PC-9 (cell line): ENCODE measurements at regions of chr3 and their contacts with region 1.

Region 1: DNA sequence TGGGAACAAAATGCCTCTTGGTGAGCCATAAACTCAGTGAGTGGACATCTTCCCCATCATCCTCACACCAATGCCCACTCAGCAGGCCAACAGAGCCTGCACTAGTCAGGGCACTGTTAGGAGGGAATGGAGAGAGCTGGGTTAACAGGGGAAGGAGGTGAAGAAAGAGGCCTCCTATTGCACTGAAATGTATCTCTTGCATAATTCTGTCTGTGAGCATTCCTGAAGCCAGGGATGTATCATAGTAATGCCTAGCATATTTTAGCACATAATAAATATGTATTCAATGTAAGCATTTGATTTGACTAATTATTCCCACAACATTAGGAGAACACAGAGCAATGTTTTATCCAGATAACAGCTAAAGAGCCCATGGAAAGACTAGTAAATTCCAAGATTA is 81.2 kb downstream of the ANO10 start:
- DNase-seq: no peak
- H3K4me3 ChIP-seq: no peak overlapping the region
- H3K27ac ChIP-seq: no peak overlapping the region
- H3K4me1 ChIP-seq: no peaks in the 10 kb centered on the region
- H3K27me3 ChIP-seq: no peaks in the 10 kb centered on the region
- CTCF ChIP-seq: no peak

Region 2: GRCh38 chr3:43231276-43232000 is 309.2 kb before region 1 on chr3:
- CTCF ChIA-PET with region 1: no interaction called
- POLR2A ChIA-PET with region 1: no interaction called
- intact Hi-C with region 1: no loop called
- DNase-seq: no peak
- H3K4me3 ChIP-seq: no peak overlapping the region
- H3K27ac ChIP-seq: no peak overlapping the region
- H3K4me1 ChIP-seq: peaks cover 7% of the 10 kb centered on the region; the same call in 1 of the 2 replicates
- H3K27me3 ChIP-seq: no peaks in the 10 kb centered on the region
- CTCF ChIP-seq: no peak

Region 3: DNA sequence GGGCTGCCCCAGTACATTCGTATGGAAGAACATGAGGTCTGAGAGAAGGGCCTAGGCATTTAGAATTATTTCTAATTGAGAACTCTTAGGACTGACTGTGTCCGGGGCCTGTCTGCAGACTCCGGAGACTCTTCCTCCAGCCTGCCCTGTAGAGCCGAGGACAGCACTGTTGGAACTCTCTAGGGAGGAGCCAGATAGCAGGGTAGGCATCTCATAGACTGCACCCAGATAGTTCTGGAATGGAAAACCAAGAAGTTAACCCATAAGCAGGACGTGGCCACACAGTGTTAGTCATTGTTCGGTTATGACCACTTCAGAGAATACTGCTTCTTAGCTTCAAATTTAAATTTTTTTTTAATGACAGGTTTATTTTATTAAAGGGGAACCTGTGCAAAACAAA is 194.7 kb before region 1 on chr3:
- CTCF ChIA-PET with region 1: no interaction called
- POLR2A ChIA-PET with region 1: no interaction called
- intact Hi-C with region 1: no loop called
- DNase-seq: no peak
- H3K4me3 ChIP-seq: no peak overlapping the region
- H3K27ac ChIP-seq: no peak overlapping the region
- H3K4me1 ChIP-seq: no peaks in the 10 kb centered on the region
- H3K27me3 ChIP-seq: no peaks in the 10 kb centered on the region
- CTCF ChIP-seq: no peak

Region 4: DNA sequence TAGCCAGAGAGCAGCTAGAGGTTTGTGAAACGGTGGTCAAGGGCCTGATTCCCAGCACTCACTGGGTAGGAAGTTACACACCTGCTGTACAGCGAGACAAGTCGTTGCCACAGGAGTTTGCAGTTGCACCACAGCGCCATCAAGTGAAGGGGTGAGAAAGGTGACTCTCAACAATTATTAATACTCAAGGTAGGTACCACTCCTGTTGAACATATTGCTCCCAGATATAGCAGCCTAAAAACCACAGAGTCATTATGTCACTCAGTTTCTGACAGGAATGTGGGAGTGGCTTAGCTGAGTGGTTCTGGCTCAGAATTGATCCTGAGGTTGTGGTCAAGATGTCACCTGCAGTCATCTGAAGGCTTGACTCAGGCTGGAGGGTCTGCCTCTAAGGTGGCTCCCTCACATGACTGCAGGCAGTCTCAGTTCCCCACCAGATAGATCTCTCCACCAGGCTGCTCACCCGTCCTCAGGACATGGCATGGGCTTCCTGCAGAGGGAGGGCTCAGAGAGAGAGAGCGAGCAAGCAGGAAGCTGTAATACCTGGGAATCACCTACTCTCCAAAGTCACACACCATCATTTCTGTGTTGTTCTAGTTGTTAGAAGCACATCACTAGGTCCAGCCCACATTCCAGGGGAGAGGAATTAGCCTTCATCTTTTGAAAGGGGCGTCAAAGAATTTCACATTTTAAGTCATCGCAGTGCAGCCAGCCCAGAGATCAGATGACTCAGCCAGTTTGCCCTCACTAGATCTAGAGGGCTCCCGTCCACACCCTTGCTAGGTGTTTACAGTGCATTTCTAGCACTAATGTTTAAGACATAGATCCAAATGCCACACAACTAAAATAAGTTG is 98.2 kb after region 1 on chr3:
- CTCF ChIA-PET with region 1: no interaction called
- POLR2A ChIA-PET with region 1: no interaction called
- intact Hi-C with region 1: loop called (anchors 1 kb)
- DNase-seq: peak; percentile 70 to 85
- H3K4me3 ChIP-seq: peak overlapping the region; percentile 18; the same call in 1 of the 2 replicates
- H3K27ac ChIP-seq: peak overlapping the region; percentile 78
- H3K4me1 ChIP-seq: peaks cover 23% of the 10 kb centered on the region
- H3K27me3 ChIP-seq: no peaks in the 10 kb centered on the region
- CTCF ChIP-seq: peak; percentile 59

Region 5: DNA sequence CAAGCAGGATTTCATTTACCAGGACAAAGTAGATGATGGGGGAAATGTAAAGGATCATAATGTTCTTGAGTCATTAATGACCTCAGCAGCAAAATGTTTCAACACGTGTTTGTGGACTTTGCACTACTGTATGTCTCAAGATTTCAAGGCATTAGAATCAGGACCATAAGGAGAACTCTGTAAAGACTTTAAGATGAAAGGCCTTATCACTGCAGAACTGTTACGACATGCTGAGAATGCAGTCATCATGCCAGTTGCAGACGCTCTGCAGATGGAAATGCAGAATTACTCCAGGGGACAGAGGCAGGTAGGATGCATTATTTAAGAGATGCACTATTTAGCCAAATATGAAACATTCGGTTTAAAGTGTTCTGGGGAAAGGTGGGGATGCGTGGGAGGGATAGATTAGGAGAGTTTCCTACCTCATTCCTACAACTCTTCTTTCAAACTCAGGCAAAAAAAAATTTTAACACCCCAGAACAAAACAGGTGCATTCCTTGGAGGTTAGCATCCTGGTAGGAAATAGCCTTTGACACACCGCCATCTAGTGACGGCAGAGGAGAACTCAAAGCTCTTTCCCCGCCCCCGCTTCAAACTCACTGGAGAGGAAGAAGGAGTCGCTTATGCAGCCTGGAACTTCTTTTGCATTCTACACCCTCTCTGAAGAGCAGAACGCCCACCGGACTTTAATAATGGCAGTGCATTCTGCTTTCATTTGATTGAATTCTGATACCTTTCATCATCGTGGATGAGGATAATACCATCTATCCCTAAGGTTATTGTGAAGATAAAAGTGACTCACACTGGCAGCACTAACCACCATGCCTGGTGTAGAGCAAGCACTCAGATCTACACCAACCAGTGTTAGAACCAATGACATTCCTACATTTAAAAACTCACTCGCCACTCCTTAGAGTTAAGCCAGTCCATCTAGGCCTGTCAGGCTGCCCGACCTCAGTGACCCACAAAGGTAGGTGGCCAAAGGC is 658.0 kb after region 1 on chr3:
- CTCF ChIA-PET with region 1: no interaction called
- POLR2A ChIA-PET with region 1: no interaction called
- intact Hi-C with region 1: loop called (anchors 2 kb)
- DNase-seq: peak; percentile 59 to 78
- H3K4me3 ChIP-seq: no peak overlapping the region
- H3K27ac ChIP-seq: no peak overlapping the region
- H3K4me1 ChIP-seq: no peaks in the 10 kb centered on the region
- H3K27me3 ChIP-seq: no peaks in the 10 kb centered on the region
- CTCF ChIP-seq: peak; percentile 79

Region 6: DNA sequence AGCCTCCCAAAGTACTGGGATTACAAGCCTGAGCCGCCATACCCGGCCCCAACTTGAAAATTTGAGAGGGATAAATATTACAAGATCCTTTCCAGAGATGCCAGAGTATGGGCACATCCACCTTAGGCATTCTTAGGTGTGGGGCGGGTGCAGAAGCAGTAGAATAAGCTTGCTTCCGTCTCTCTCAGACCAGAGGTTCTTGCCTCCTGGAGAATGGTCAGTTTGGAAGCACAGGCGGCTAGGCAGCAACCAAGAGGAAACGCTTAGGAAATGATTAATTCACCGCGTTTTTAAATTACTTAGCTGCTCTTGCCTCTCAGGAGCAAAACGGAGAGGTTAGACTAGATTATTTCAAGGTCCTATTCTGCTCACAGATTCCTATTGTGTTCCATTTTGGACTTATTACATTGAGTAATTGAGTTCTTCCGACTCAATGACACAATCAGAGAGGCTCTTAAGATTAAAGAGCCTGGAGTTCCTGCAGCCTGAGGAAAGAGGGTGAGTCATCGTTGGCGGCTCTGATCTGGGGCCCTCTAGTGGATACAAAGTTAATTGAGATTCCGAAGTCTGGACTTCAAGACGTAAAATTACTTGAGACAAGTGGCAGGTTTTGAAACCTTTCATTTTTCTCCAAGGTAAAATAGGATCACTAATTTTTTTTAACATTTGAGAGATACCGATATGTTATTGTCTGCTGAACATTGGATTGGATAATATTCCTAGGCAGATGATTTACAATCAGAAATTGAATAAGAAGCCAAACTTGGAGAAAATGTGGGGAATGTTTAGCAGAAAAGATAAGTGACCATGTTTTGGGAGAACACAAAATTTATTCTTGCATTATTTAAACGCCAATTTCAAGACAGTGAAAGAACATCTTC is 695.2 kb after region 1 on chr3:
- CTCF ChIA-PET with region 1: no interaction called
- POLR2A ChIA-PET with region 1: no interaction called
- intact Hi-C with region 1: loop called (anchors 5 kb)
- DNase-seq: peak; percentile 61 to 77
- H3K4me3 ChIP-seq: no peak overlapping the region
- H3K27ac ChIP-seq: no peak overlapping the region
- H3K4me1 ChIP-seq: no peaks in the 10 kb centered on the region
- H3K27me3 ChIP-seq: no peaks in the 10 kb centered on the region
- CTCF ChIP-seq: peak; percentile 78

Region 7: DNA sequence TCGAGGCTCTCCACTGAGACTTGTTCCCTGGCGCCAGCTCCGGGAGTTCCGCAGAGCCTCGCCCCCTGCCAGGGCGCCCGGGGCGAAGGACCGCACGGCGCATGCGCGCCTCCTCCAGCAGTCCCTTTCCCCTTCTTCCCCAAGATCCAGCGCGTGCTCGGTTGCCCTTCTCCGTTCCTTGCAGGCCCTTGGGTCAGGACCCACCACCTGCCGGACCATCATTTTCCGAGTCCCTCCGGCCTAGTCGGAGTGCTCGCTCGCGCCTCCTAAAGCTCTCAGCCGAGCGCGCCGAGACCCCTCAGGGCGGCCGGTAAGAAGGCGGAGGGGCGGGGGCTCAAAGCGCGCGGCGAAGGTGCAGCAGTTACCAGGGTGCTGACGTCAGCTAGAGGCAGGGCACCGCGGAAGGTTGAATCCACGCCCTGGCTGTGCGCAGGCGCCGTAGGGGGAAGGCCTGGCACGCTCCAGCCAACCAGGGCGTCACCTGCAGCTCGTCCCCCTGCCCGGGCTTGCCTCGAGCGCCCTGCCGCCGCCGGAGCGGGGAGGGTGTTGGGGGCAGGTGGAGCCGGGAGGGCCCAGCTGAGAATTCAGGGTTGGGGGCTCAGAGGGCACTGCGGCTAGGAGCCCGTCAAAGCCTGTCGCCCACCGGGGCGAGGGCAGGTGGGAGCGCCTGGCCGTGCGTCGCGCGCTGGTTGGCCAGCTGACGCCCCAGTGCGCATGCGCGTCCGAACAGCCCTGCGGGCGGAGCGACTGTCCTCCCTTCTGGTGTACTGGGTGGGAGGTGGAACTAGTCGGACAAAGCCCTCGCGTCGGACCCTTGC is 797.6 kb after region 1 on chr3 and contains the start of gene TCAIM:
- CTCF ChIA-PET with region 1: no interaction called
- POLR2A ChIA-PET with region 1: no interaction called
- intact Hi-C with region 1: loop called (anchors 10 kb)
- DNase-seq: peak; percentile 88 to 98
- H3K4me3 ChIP-seq: peak within 1 kb of the TSS; percentile 69
- H3K27ac ChIP-seq: peak within 1 kb of the TSS; percentile 63
- H3K4me1 ChIP-seq: peaks cover 19% of the 10 kb centered on the region
- H3K27me3 ChIP-seq: no peaks in the 10 kb centered on the region
- CTCF ChIP-seq: no peak
- total RNA-seq, gene TCAIM: 22.8 and 28.3 TPM in 2 replicates